IMR-90 (cell line): ENCODE measurements at regions of chr6 and their contacts with region 1.

Region 1: DNA sequence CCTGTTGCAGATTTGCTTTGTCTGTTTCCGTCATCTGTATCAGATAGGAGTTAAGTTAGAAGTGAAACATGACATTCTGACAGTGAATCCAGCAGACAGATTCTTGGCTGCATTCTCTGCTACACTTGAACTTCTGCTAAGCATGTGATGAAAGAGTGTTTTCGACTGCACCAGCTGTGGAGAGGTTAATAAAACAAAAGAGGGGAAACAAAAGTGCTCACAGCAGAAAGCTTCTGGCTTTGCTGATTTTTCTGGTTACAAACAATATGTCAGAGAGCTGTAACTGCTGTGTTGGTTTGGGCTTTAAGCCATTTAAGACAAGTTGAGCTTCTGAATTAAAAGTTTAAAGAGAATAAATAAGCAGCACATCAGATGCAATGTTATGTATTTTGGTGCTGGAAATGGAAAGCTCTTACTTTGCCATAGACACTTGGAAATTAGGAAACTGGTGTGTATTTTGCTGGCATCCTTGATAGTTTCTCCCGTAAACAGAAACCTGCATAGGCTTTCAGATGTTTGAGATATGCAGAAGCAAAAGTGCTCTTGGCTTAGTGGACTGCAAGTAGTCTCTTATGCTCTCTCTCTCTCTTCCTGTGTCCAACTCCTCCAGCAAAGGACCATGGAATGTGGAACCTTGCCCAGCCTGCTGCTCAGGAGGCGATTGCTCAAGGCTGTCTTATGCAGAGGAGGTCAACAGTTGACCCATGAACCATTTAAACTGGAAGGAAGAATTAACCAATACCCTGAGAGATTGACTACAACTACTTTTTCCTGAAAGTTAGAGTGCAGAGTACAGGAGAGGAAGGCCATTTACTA is 104.9 kb downstream of the RPS12 start:
- DNase-seq: peak; percentile 98
- ATAC-seq: peak; percentile 98
- H3K4me3 ChIP-seq: peak overlapping the region; percentile 2; the same call in 1 of the 2 replicates
- H3K27ac ChIP-seq: peak overlapping the region; percentile 6; the same call in 1 of the 2 replicates
- H3K4me1 ChIP-seq: peaks cover 7% of the 10 kb centered on the region
- H3K27me3 ChIP-seq: no peaks in the 10 kb centered on the region
- CTCF ChIP-seq: no peak
- POLR2A ChIP-seq: no peak
- RAD21 ChIP-seq: no peak

Region 2: GRCh38 chr6:132843316-132844043 is 75.8 kb before region 1 on chr6:
- CTCF ChIA-PET with region 1: no interaction called
- POLR2A ChIA-PET with region 1: no interaction called
- dilution Hi-C with region 1: no loop called
- in situ Hi-C with region 1: no loop called
- intact Hi-C with region 1: no loop called
- DNase-seq: no peak
- ATAC-seq: no peak
- H3K4me3 ChIP-seq: no peak overlapping the region
- H3K27ac ChIP-seq: no peak overlapping the region
- H3K4me1 ChIP-seq: no peaks in the 10 kb centered on the region; the same call in 1 of the 2 replicates
- H3K27me3 ChIP-seq: no peaks in the 10 kb centered on the region
- CTCF ChIP-seq: no peak
- POLR2A ChIP-seq: no peak
- RAD21 ChIP-seq: no peak

Region 3: DNA sequence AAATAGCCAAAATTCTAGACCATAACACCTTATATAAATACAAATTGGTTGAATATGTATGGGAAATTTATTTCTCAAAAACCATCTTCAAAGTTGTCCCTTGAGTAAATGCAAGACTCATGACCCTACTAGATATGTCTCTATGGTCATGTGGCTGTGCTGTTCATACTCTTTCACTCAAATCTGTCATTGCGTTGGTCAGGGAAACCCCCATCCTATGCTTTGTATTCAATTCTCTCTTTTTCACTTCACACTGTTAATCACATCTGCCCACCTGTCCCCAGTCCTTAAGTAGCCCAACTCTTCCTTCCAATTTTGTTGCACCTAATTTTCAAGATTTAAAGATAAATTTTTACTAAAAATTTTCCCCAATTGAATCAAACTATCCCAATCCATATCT is 53.9 kb before region 1 on chr6:
- CTCF ChIA-PET with region 1: no interaction called
- POLR2A ChIA-PET with region 1: no interaction called
- dilution Hi-C with region 1: no loop called
- in situ Hi-C with region 1: no loop called
- intact Hi-C with region 1: loop called (anchors 5 kb)
- DNase-seq: no peak
- ATAC-seq: no peak
- H3K4me3 ChIP-seq: no peak overlapping the region
- H3K27ac ChIP-seq: no peak overlapping the region
- H3K4me1 ChIP-seq: no peaks in the 10 kb centered on the region
- H3K27me3 ChIP-seq: peaks cover 2% of the 10 kb centered on the region; the same call in 1 of the 2 replicates
- CTCF ChIP-seq: no peak
- POLR2A ChIP-seq: no peak
- RAD21 ChIP-seq: no peak

Region 4: GRCh38 chr6:134714679-134715421 is 1795.6 kb after region 1 on chr6:
- CTCF ChIA-PET with region 1: no interaction called
- POLR2A ChIA-PET with region 1: interaction called, 16 read pairs
- dilution Hi-C with region 1: no loop called
- in situ Hi-C with region 1: no loop called
- intact Hi-C with region 1: no loop called
- DNase-seq: peak; percentile 35
- ATAC-seq: no peak
- H3K4me3 ChIP-seq: no peak overlapping the region
- H3K27ac ChIP-seq: no peak overlapping the region
- H3K4me1 ChIP-seq: peaks cover 3% of the 10 kb centered on the region; the same call in 1 of the 2 replicates
- H3K27me3 ChIP-seq: no peaks in the 10 kb centered on the region
- CTCF ChIP-seq: no peak
- POLR2A ChIP-seq: no peak
- RAD21 ChIP-seq: no peak